Ascending aorta (tissue), 2 donors: ENCODE measurements at regions of chr10 and their contacts with region 1.

Region 1: GRCh38 chr10:132516771-132517725 is 20.5 kb upstream of the INPP5A start:
- DNase-seq: peak; percentile 87 to 98
- H3K4me3 ChIP-seq: peak overlapping the region; percentile 37 to 45
- H3K27ac ChIP-seq: peak overlapping the region; percentile 97
- H3K4me1 ChIP-seq: peaks cover 24 to 58% of the 10 kb centered on the region in 2 donors
- H3K27me3 ChIP-seq: no peaks in the 10 kb centered on the region
- CTCF ChIP-seq: no peak

Region 2: GRCh38 chr10:131981429-131982184 is 535.4 kb before region 1 on chr10 and contains the start of gene BNIP3:
- intact Hi-C with region 1: no loop called
- DNase-seq: peak; percentile 82 to 96
- H3K4me3 ChIP-seq: peak within 1 kb of the TSS; percentile 92 to 99
- H3K27ac ChIP-seq: peak within 1 kb of the TSS; percentile 48 to 67
- H3K4me1 ChIP-seq: peaks cover 6 to 11% of the 10 kb centered on the region in 2 donors
- H3K27me3 ChIP-seq: no peaks in the 10 kb centered on the region
- CTCF ChIP-seq: peak in 2 of 3 experiments; percentile 6 to 9
- total RNA-seq, gene BNIP3: 18.3 TPM

Region 3: DNA sequence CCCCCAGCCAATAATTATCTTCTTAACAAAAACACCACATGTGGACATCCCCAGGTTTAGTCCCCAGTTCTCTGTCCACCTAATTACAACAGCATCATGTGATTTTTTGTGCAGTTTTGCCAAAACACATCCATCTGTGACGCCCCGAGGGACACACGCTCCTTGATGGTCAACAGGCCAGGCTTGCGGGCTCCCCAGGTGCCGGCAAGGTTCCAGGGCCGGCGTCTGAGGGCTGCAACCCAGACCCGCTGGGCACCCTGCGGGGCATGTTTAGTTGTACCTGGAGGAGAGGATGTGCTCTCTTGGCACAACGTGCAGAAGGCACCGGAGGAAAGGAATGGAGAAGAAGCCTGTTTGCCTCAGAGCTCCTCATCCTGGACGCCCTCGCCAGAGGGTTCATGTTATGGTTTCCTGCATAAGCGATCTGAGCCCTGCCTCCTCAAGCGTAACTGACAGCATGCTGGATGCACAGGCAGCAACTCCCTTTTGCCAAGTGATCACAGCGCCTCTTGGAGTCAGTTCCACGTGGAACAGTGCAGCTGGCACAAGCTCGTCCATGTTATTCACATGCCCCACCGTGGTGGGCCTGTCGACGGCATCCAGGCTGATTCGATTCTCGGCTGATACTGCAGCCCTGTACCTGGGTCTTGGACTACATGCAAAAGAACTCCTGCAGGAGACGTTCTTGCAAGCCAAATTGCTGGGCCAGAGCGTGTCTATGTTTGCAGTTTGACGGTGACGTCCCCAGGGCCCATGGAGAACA is 409.7 kb before region 1 on chr10:
- intact Hi-C with region 1: no loop called
- DNase-seq: no peak
- H3K4me3 ChIP-seq: no peak overlapping the region
- H3K27ac ChIP-seq: no peak overlapping the region
- H3K4me1 ChIP-seq: no peaks in the 10 kb centered on the region
- H3K27me3 ChIP-seq: no peaks in the 10 kb centered on the region
- CTCF ChIP-seq: no peak

Region 4: GRCh38 chr10:132482090-132482800 is 34.8 kb before region 1 on chr10:
- intact Hi-C with region 1: no loop called
- DNase-seq: no peak
- H3K4me3 ChIP-seq: no peak overlapping the region
- H3K27ac ChIP-seq: peak overlapping the region in 1 of 2 donors; percentile 60
- H3K4me1 ChIP-seq: no peaks in the 10 kb centered on the region
- H3K27me3 ChIP-seq: peaks cover 4% of the 10 kb centered on the region
- CTCF ChIP-seq: no peak

Region 5: GRCh38 chr10:132571650-132572535 is 54.8 kb after region 1 on chr10:
- intact Hi-C with region 1: loop called (anchors 1 kb)
- DNase-seq: peak; percentile 48 to 84
- H3K4me3 ChIP-seq: peak overlapping the region in 1 of 2 donors; percentile 34
- H3K27ac ChIP-seq: peak overlapping the region; percentile 70 to 78
- H3K4me1 ChIP-seq: peaks cover 35 to 49% of the 10 kb centered on the region in 2 donors
- H3K27me3 ChIP-seq: no peaks in the 10 kb centered on the region
- CTCF ChIP-seq: no peak

Region 6: DNA sequence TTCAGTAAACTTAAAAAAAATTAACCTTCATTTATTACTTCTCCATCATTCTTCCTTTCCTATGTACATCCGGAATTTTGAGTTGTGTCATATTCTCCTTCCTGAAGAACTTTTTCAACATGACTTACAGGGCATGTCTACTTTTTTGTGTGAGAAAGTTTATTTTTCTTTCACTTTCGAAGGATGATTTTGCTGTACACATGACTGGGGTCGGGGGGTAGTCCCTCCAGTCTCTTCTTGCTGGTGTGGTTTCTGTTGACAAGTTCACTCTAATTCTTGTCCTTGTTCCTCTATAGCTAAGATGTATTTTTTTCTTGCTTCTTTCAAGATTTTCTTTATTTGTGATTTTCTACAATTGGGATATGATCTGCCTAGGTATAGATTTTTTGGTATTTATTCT is 76.3 kb after region 1 on chr10:
- intact Hi-C with region 1: loop called (anchors 5 kb)
- DNase-seq: no peak
- H3K4me3 ChIP-seq: no peak overlapping the region
- H3K27ac ChIP-seq: peak overlapping the region; percentile 81 to 86
- H3K4me1 ChIP-seq: peaks cover 28 to 53% of the 10 kb centered on the region in 2 donors
- H3K27me3 ChIP-seq: no peaks in the 10 kb centered on the region
- CTCF ChIP-seq: no peak

Region 7: DNA sequence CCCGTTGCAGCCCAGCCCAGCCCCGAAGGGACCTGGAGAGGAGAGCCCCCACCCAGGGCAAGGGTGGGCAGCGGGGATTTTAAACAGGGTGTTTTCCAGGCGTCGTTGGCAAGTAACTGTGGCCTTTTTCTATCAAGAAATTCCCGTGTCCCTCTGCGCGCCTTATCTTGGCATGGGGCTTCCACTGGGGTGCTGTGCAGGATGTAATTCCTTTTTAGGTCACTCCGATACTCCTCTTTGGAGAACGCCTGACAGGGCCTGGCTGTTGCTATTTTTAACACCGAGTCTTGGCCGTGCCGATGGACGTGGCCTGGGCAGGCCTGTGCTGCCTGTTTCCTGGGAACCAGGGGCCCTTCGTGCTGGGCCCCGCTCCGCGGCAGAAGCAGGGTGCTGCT is 114.3 kb after region 1 on chr10:
- intact Hi-C with region 1: loop called (anchors 1 kb)
- DNase-seq: peak; percentile 64 to 92
- H3K4me3 ChIP-seq: peak overlapping the region in 1 of 2 donors; percentile 37
- H3K27ac ChIP-seq: peak overlapping the region; percentile 97 to 98
- H3K4me1 ChIP-seq: peaks cover 34 to 73% of the 10 kb centered on the region in 2 donors
- H3K27me3 ChIP-seq: no peaks in the 10 kb centered on the region
- CTCF ChIP-seq: no peak